Activated T-helper 2 cell treated with anti-CD3 and anti-CD28 coated beads, Interferon-gamma antibody, Interleukin-2, Interleukin-4, amounts not matched to agents 10 μg/mL and 5 μg/mL and 100 μg/mL, durations not matched to agents 14 hours and 24 hours and 36 hours (primary cell): ENCODE measurements at regions of chr2 and their contacts with region 1.

Region 1: DNA sequence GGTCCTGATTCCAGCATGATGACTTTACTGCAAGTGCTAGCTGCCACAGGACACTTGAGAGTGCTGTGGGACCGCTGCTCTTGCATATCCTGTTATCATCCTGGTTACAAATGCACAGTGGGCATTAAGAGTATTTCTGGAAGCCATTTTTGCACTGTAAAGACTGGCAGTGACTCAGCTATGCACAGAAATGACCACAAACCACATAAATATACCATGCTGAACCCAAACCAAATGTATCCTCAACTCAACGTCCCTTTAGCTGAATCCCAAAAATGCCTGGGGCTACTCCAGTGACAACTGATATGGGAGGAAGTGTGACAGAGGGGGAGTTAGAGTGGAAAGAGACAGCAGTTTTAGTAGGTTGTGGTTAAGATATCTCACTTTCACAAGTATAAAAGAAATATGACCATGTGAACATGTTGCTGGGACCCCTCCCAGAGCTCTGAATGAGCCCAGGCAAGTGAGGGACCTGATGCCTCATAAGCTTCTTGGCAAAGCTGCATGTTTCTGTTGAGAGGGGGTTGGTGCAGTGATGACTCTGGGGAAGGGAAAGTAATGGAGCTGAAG is 37.3 kb downstream of the RHBDD1 start:
- DNase-seq: no peak
- H3K4me3 Mint-ChIP-seq: no peak overlapping the region
- H3K27ac Mint-ChIP-seq: peak overlapping the region; percentile 68
- H3K4me1 Mint-ChIP-seq: peaks cover 22% of the 10 kb centered on the region
- H3K27me3 Mint-ChIP-seq: no peaks in the 10 kb centered on the region

Region 2: DNA sequence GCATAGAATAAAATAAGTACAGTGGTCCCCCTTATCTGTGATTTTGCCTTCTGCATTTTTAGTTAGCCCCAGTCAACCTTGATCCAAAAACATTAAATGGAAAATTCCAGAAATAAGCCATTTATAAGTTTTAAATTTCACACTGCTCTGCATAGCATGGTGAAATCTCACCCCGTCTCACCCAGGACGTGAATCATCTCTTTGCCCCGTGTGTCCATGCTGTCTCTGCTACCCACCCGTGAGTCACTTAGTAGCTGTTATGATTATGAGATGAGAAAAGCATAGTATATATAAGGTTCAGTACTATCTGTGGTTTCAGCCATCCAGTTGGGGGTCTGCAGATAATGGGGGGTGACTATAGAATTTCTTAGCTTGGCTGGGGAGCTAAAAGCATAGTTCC is 30.0 kb after region 1 on chr2:
- intact Hi-C with region 1: loop called (anchors 2 kb)
- DNase-seq: no peak
- H3K4me3 Mint-ChIP-seq: no peak overlapping the region
- H3K27ac Mint-ChIP-seq: no peak overlapping the region
- H3K4me1 Mint-ChIP-seq: peaks cover 22% of the 10 kb centered on the region
- H3K27me3 Mint-ChIP-seq: no peaks in the 10 kb centered on the region

Region 3: GRCh38 chr2:227415538-227416424 is 542.6 kb after region 1 on chr2:
- intact Hi-C with region 1: no loop called
- DNase-seq: no peak
- H3K4me3 Mint-ChIP-seq: peak overlapping the region; percentile 39
- H3K27ac Mint-ChIP-seq: peak overlapping the region; percentile 72
- H3K4me1 Mint-ChIP-seq: peaks cover 48% of the 10 kb centered on the region
- H3K27me3 Mint-ChIP-seq: no peaks in the 10 kb centered on the region